Mammary epithelial cell (primary cell): ENCODE measurements at regions of chr21 and their contacts with region 1.

Region 1: GRCh38 chr21:29372063-29372802 is 73.5 kb downstream of the BACH1 start:
- DNase-seq: peak; percentile 52
- H3K4me3 ChIP-seq: no peak overlapping the region
- H3K27ac ChIP-seq: no peak overlapping the region
- H3K4me1 ChIP-seq: no peaks in the 10 kb centered on the region
- H3K27me3 ChIP-seq: no peaks in the 10 kb centered on the region
- CTCF ChIP-seq: peak; percentile 56 to 72

Region 2: DNA sequence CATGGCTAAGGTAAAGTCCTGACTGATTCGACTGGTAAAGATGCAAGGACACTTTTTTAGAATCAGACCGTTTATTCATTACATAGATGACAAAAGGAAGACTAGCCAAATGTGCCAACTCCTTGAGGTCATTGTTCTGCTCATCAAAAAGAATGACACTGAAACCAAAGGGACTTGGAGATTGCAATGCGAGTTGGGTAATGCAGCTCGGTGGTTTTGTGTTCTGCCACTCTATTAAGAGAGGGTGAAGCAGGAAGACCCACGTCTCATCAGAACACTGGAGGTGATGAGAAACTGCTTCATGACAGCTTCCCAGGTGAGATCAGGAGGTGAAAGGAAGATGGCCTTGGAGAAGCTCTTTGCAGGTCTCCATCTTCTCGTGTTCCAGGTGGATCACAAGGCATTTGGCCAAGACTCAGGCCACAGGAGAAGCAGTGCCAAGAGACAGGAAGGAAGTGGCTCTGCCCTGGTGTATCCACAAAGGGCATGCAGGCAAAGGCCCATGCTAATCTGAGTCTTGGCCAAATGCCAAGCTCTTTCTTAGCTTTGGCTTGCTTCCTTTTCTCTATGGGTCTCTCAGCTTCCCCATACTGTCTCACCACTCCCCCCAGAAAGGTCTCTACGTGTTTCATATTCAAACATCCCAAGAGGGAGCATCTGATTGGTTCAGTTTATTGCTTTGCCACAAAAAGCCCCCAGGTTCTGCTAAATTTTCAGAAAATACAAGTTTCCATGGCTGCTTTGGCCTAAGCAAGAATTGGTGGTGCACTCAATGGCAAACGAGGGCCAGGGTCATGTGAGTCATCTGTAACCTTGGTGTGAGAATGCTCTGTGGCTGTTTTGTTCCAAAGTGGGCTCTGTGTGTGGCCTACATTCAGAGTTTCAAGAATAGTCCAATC is 293.1 kb before region 1 on chr21:
- CTCF ChIA-PET with region 1: no interaction called
- dilution Hi-C with region 1: no loop called
- in situ Hi-C with region 1: loop called in 1 of 2 experiments (anchors 10 kb)
- intact Hi-C with region 1: no loop called
- DNase-seq: no peak
- H3K4me3 ChIP-seq: no peak overlapping the region
- H3K27ac ChIP-seq: no peak overlapping the region
- H3K4me1 ChIP-seq: peaks cover 19% of the 10 kb centered on the region
- H3K27me3 ChIP-seq: no peaks in the 10 kb centered on the region
- CTCF ChIP-seq: no peak

Region 3: DNA sequence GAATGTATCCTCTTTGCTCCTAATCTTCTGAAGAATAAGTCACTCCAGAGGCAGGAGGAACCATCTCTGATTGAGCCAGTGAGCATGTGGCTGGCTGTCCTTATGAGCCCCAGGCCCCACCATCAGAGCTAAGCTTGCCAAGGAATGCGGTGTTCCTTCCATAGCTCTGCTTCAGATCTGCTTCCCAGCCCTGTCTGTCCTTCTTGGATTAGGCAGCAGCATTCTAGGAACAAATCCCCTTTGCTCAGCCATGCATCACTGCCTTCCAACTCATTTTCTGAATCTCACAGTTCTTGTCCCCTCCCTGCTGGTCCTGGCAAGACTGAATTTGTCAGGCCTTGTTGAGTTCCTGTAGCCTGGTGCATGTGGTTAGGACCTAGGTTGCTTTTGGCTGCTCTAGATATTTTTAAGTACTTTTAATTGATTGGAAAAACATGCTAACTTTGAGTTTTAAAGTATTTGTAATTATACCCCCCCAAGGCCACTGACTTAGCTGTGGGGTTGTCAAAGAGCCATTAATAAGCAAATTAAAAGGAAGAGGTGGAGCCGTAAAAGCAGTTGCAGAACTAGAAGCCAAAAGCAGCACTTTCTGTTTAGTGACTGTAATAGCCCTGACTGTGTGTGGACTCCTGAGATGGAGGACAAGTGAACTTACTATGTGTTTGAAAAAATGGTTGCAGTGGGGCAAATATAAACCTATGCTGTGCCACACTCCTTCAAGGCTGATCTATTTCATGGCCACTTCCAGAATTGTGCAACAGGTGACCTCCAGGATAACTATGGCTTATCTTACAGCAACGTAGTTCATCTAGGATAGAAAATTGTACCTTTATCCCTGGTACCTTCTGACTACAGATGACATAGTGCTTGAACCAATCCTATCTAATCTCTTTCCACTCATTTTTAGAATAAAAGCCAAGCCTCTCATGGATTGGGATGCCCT is 134.9 kb before region 1 on chr21:
- CTCF ChIA-PET with region 1: no interaction called
- dilution Hi-C with region 1: no loop called
- in situ Hi-C with region 1: no loop called
- intact Hi-C with region 1: no loop called
- DNase-seq: no peak
- H3K4me3 ChIP-seq: no peak overlapping the region
- H3K27ac ChIP-seq: no peak overlapping the region
- H3K4me1 ChIP-seq: peaks cover 32% of the 10 kb centered on the region
- H3K27me3 ChIP-seq: no peaks in the 10 kb centered on the region
- CTCF ChIP-seq: no peak

Region 4: DNA sequence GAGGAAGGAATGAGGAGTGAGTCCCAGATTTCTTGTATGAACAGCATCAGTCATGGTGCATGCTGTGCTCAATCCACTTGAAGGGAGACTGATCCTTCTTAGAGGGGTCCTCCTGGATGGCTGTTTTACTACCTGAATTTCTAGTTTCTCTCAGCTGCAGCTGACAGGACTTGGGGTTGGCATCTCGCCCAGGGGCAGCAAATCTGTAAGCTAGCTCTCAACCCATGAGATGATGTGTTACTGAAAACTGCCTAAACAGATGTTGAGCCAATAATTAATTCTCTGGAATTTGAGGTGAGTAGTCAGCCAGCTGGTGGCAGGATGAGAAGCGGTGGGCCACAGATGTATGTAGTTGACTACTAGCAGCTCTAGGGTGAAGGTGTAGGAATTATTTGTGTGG is 53.9 kb before region 1 on chr21:
- CTCF ChIA-PET with region 1: no interaction called
- dilution Hi-C with region 1: no loop called
- in situ Hi-C with region 1: no loop called
- intact Hi-C with region 1: no loop called
- DNase-seq: no peak
- H3K4me3 ChIP-seq: no peak overlapping the region
- H3K27ac ChIP-seq: no peak overlapping the region
- H3K4me1 ChIP-seq: peaks cover 10% of the 10 kb centered on the region
- H3K27me3 ChIP-seq: no peaks in the 10 kb centered on the region
- CTCF ChIP-seq: no peak

Region 5: GRCh38 chr21:29329406-29329805 is 42.8 kb before region 1 on chr21:
- CTCF ChIA-PET with region 1: no interaction called
- dilution Hi-C with region 1: no loop called
- in situ Hi-C with region 1: no loop called
- intact Hi-C with region 1: no loop called
- DNase-seq: no peak
- H3K4me3 ChIP-seq: no peak overlapping the region
- H3K27ac ChIP-seq: no peak overlapping the region
- H3K4me1 ChIP-seq: peaks cover 7% of the 10 kb centered on the region
- H3K27me3 ChIP-seq: no peaks in the 10 kb centered on the region
- CTCF ChIP-seq: no peak

Region 6: DNA sequence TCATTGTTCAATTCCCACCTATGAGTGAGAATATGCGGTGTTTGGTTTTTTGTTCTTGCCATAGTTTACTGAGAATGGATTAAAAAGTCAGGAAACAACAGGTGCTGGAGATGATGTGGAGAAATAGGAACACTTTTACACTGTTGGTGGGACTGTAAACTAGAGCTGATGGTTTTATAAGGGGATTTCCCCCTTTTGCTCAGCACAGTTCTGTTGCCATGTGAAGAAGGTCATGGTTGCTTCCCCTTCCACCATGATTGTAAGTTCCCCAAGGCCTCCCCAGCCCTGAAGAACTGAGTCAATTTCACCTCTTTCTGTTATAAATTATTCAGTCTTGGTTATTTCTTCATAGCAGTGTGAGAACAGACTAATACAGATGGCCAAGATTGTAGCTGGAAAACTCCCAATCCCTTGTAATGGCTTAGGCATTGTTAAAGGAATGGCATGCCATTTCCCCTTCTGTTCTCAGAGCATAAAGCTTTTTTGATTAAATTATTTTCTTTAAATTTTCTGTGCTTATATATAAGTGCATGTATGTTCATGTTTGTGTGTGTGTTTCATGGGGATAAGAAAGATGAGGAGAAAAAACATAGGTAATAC is 71.3 kb after region 1 on chr21:
- CTCF ChIA-PET with region 1: no interaction called
- dilution Hi-C with region 1: no loop called
- in situ Hi-C with region 1: no loop called
- intact Hi-C with region 1: no loop called
- DNase-seq: no peak
- H3K4me3 ChIP-seq: no peak overlapping the region
- H3K27ac ChIP-seq: no peak overlapping the region
- H3K4me1 ChIP-seq: no peaks in the 10 kb centered on the region
- H3K27me3 ChIP-seq: no peaks in the 10 kb centered on the region
- CTCF ChIP-seq: no peak